GM13976 (cell line): ENCODE measurements at regions of chr13 and their contacts with region 1.

Region 1: GRCh38 chr13:20182231-20182846 is 10.4 kb downstream of the GJB2 start:
- DNase-seq: peak; percentile 82
- CTCF ChIP-seq: peak; percentile 78

Region 2: DNA sequence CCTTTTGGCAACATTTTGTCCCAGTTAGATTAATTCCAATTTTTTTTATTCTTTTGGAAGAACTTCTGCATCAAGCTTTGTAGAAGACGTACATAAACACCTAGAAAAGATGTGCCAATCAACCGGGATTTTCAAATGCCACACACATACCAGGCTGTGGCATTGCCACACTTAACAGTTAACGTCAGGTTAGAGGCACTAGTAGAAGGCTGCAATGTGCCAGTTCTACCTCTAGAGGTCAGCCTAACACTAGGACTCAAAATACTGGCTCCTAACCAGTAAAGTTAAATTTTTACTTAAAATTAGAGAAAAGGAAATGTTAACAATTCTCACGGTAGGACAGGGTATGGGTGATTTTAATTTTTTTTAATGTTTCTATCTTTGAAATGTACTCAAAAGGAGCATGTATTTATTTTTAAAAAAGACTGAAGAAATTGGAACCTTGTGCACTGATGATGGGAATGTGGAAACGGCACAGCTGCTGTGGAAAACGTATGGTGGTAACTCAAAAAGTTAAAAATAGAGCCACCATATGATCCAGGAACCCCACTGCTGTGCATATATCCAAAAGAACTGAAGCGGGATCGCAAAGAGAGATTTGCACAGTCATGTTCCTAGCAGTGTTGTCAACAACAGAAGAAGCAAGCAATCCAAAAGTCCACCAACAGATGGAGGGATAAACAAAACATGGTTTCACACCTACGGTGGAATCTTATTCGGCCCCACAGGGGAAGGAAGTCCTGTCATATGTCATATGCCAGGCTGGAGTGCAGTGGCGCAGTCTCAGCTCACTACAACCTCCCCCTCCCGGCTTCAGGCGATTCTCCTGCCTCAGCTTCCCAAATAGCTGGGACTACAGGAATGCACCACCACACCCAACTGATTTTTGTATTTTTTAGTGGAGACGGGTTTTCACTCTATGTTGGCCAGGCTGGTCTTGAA is 313.0 kb after region 1 on chr13:
- in situ Hi-C with region 1: no loop called
- DNase-seq: peak; percentile 72
- CTCF ChIP-seq: peak; percentile 89

Region 3: DNA sequence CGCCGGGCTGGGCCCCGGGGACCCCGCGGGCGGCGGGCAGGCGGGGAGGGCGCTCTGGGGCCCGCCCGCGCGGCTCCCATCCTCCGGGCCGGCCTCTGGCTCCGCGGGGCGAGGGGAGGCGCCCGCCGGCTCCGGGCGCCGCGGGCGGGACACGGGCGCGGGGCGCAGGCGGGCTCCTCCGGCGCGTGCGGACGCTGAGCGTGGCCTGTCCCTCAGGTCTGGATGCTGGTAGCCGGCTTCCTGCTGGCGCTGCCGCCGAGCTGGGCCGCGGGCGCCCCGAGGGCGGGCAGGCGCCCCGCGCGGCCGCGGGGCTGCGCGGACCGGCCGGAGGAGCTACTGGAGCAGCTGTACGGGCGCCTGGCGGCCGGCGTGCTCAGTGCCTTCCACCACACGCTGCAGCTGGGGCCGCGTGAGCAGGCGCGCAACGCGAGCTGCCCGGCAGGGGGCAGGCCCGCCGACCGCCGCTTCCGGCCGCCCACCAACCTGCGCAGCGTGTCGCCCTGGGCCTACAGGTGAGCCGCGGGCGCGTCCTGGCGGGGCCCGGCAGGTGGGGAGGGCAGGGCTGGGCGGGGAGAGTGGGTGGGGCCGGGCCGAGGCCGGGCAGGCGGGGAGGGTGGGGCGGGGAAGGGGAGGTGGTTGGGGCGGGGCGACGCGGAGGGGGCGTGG is 521.6 kb after region 1 on chr13:
- in situ Hi-C with region 1: loop called (anchors 25 kb)
- DNase-seq: peak; percentile 92
- CTCF ChIP-seq: peak; percentile 73

Region 4: DNA sequence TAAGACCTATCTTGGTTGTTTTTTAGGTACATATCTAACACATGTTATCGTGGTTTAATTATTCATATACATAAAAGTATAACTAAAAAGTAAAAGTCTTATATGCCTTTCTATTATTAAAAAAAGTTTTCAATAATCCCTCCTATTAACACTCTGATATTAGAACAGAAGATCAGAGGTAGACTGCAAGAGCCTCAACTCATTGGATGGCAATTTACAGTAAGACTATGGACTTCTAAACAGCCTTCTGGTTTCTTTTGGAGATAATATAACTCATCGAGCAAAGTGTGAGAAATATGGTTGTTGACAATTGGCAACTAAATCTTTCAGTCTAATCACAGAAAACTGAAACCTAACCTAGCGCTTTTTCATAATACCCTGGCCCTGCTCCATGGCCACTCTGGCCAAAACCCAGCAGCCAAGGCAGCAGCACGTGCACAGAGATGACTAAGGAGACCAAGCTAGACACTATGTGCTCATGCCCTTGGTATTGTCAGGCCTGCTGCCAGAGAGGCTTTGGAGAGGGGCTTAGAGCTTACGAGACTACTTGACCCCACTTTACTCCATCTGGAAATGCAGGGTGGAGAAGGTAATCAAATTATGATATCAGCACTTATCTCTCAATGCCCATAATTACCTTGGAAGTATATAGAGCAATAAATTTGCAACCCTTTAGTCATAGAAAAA is 632.0 kb after region 1 on chr13:
- in situ Hi-C with region 1: loop called (anchors 25 kb)
- DNase-seq: no peak
- CTCF ChIP-seq: no peak

Region 5: DNA sequence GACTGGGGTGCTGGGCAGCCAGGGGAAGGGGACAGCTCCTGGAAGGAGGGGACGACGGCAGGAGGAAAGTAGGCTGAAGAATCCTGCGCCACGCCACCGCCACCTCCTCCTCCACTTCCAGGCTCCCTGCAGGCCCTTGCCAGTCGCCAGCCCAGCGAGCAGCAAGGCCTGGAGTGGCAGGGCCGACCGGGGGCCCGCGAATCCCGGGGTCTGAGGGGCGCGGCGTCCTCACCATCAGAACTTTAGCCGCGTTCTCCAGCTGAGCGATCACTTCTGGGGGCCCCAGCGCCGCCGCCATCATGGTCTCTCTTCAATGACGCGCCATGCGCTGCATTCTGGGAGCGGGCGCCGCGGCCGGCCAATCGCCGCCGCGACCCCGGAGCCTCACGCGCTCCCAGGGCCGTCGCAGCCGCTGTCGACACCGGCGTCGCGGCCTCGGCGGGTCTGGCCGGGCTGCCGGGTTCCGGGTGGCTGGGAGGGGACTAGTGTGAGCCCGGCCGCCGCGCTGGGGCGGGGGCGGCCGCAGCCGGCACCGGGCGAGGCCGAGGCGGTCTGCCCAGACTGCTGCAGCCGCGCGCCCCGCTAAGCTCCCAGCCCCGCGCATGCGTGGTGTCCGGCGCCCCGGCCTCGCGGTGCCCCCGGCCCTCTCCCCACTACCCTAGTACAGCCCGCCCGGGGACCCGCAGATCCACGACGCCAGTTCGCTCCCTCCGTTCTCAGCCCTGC is 720.3 kb after region 1 on chr13 and contains the start of gene XPO4:
- in situ Hi-C with region 1: loop called (anchors 25 kb)
- DNase-seq: peak; percentile 94
- CTCF ChIP-seq: no peak